Activated T-helper 1 cell treated with anti-CD3 and anti-CD28 coated beads, Interleukin-12 subunit alpha, Interleukin-12 subunit beta, Interleukin-2, Interleukin-4 antibody, amounts not matched to agents 30 ng/mL and 10 ng/mL and 1 ng/mL, durations not matched to agents 14 hours and 24 hours and 36 hours (primary cell): ENCODE measurements at regions of chr5 and their contacts with region 1.

Region 1: GRCh38 chr5:115377468-115378217 is 81.2 kb upstream of the CCDC112 start:
- DNase-seq: no peak
- H3K4me3 Mint-ChIP-seq: no peak overlapping the region
- H3K27ac Mint-ChIP-seq: peak overlapping the region; percentile 5
- H3K4me1 Mint-ChIP-seq: peaks cover 29% of the 10 kb centered on the region
- H3K27me3 Mint-ChIP-seq: peaks cover 3% of the 10 kb centered on the region

Region 2: DNA sequence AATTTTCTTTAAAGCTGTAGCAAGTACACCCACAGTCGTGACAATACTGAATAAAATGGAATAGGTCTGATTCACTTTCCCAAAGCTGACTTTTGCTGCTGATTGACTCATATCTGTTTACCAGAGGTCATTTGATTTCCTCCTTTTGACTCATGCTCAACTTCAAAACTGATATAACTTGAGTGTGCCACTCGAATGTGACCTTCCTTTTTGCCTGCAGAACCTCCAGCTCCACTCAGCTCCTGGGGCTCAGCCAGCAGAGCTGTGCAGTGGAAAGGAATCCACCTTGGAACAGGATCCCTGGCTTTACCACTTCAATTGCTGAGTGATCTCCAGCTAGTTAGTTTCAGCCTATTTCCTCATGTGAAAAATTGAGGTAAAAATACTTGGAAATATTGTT is 82.8 kb after region 1 on chr5:
- intact Hi-C with region 1: loop called (anchors 1 kb)
- DNase-seq: no peak
- H3K4me3 Mint-ChIP-seq: no peak overlapping the region
- H3K27ac Mint-ChIP-seq: no peak overlapping the region
- H3K4me1 Mint-ChIP-seq: peaks cover 4% of the 10 kb centered on the region
- H3K27me3 Mint-ChIP-seq: peaks cover 17% of the 10 kb centered on the region

Region 3: GRCh38 chr5:115571441-115571878 is 193.8 kb after region 1 on chr5:
- intact Hi-C with region 1: loop called (anchors 5 kb)
- DNase-seq: no peak
- H3K4me3 Mint-ChIP-seq: no peak overlapping the region
- H3K27ac Mint-ChIP-seq: no peak overlapping the region
- H3K4me1 Mint-ChIP-seq: no peaks in the 10 kb centered on the region
- H3K27me3 Mint-ChIP-seq: peaks cover 8% of the 10 kb centered on the region